Endothelial cell of umbilical vein (primary cell): ENCODE measurements at regions of chr1 and their contacts with region 1.

Region 1: DNA sequence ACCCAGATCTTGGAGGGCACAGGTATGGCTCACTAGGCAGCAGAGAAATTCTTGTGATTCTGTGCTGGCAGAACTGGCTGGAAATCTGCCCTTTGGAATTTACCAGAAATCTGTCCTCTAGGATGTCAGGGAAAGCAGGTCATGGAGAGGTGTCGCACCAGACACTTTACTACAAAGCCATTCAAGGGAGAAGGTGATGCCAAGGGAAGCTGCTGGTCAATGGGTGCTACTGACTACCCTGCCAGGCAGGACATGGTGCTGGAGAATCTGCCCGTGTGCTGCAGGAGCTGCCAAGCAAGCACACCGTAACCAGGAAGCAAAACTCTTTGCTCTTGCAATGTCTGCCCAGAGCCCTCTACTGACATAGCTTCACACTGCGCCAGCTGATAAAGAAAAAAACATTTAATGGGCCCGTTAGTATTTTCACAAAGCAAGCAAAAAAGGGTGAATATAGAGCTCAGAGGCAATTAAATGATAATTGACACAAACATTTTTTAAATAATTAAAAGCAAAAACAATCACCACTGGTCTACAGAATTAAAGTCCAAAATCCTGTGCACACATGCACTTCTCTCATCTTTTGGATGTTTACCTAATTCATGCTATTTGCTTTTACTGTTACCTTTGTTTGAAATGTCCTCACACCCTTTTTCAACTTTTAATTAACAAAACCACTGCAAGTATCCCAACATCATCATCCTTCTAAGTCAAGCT is 7.2 kb upstream of the FBXO28 start:
- DNase-seq: peak; percentile 67
- H3K4me3 ChIP-seq: no peak overlapping the region
- H3K27ac ChIP-seq: no peak overlapping the region
- H3K4me1 ChIP-seq: peaks cover 9% of the 10 kb centered on the region
- H3K27me3 ChIP-seq: no peaks in the 10 kb centered on the region
- CTCF ChIP-seq: peak; percentile 49 to 58
- POLR2A ChIP-seq: no peak

Region 2: GRCh38 chr1:223700942-223701637 is 405.6 kb before region 1 on chr1:
- CTCF ChIA-PET with region 1: interaction called, 5 read pairs
- POLR2A ChIA-PET with region 1: interaction called, 4 read pairs
- dilution Hi-C with region 1: no loop called
- intact Hi-C with region 1: loop called (anchors 1 kb)
- DNase-seq: peak; percentile 74
- H3K4me3 ChIP-seq: no peak overlapping the region
- H3K27ac ChIP-seq: peak overlapping the region; percentile 73
- H3K4me1 ChIP-seq: peaks cover 37% of the 10 kb centered on the region
- H3K27me3 ChIP-seq: no peaks in the 10 kb centered on the region
- CTCF ChIP-seq: no peak
- POLR2A ChIP-seq: peak; percentile 26